WTC11 (cell line): ENCODE measurements at regions of chr4 and their contacts with region 1.

Region 1: GRCh38 chr4:41281038-41281634 is 24.4 kb downstream of the UCHL1 start:
- DNase-seq: no peak
- ATAC-seq: peak; percentile 98
- H3K4me3 Mint-ChIP-seq: no peak overlapping the region
- H3K27ac Mint-ChIP-seq: no peak overlapping the region
- H3K4me1 Mint-ChIP-seq: no peaks in the 10 kb centered on the region
- H3K27me3 Mint-ChIP-seq: peaks cover 5% of the 10 kb centered on the region; the same call in 1 of the 2 replicates
- CTCF ChIP-seq: peak; percentile 69; the same call in 1 of the 2 replicates

Region 2: GRCh38 chr4:41216294-41217019 is 64.7 kb before region 1 on chr4:
- CTCF ChIA-PET with region 1: no interaction called
- POLR2A ChIA-PET with region 1: no interaction called
- DNase-seq: peak; percentile 80
- ATAC-seq: peak; percentile 22
- H3K4me3 Mint-ChIP-seq: peak overlapping the region; percentile 83
- H3K27ac Mint-ChIP-seq: peak overlapping the region; percentile 99
- H3K4me1 Mint-ChIP-seq: peaks cover 48% of the 10 kb centered on the region
- H3K27me3 Mint-ChIP-seq: peaks cover 13% of the 10 kb centered on the region
- CTCF ChIP-seq: no peak

Region 3: GRCh38 chr4:41268022-41268421 is 13.1 kb before region 1 on chr4:
- CTCF ChIA-PET with region 1: no interaction called
- POLR2A ChIA-PET with region 1: no interaction called
- DNase-seq: no peak
- ATAC-seq: no peak
- H3K4me3 Mint-ChIP-seq: no peak overlapping the region
- H3K27ac Mint-ChIP-seq: no peak overlapping the region
- H3K4me1 Mint-ChIP-seq: no peaks in the 10 kb centered on the region
- H3K27me3 Mint-ChIP-seq: no peaks in the 10 kb centered on the region
- CTCF ChIP-seq: no peak

Region 4: GRCh38 chr4:41339812-41340809 is 59.0 kb after region 1 on chr4:
- CTCF ChIA-PET with region 1: interaction called, 10 read pairs
- POLR2A ChIA-PET with region 1: no interaction called
- DNase-seq: peak; percentile 58
- ATAC-seq: peak; percentile 92
- H3K4me3 Mint-ChIP-seq: no peak overlapping the region
- H3K27ac Mint-ChIP-seq: peak overlapping the region; percentile 82
- H3K4me1 Mint-ChIP-seq: peaks cover 20% of the 10 kb centered on the region
- H3K27me3 Mint-ChIP-seq: no peaks in the 10 kb centered on the region
- CTCF ChIP-seq: no peak

Region 5: DNA sequence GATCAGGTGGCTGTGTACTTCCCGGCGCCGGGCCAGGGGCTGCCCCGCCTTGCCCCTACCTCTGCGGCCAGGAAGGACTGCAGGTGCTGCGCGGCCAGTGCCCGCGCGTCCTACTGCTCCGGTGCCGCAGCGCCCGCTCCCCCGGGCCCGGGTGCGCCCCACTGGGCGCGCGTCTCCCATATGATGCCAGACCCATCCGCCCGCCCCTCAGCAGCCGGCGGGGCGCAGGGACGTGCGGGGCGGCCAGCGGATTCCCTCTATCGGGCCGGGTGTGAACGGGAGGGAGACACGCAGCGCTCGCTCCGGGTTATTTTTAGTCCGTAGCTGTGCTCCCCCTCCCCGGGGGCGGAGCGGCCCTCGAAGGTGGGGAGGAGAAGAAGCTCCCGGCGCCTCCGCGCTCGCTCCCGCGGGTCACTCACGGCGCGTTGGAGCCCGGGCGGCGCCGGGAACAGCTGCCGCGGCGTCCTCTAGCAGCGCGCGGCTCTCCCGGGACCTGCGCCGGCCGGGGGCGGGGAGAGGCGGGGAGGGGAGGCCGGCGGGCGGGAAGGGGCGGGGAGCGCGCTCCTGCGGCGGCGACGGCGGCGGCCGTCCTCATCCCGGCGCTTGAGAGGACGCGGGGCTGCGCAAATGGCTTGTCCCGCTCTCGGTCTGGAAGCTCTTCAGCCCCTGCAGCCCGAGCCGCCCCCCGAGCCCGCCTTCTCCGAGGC is 79.2 kb after region 1 on chr4:
- CTCF ChIA-PET with region 1: interaction called, 29 read pairs
- POLR2A ChIA-PET with region 1: no interaction called
- DNase-seq: peak; percentile 64
- ATAC-seq: peak; percentile 28
- H3K4me3 Mint-ChIP-seq: peak overlapping the region; percentile 66
- H3K27ac Mint-ChIP-seq: no peak overlapping the region
- H3K4me1 Mint-ChIP-seq: peaks cover 40% of the 10 kb centered on the region
- H3K27me3 Mint-ChIP-seq: peaks cover 91% of the 10 kb centered on the region
- CTCF ChIP-seq: no peak

Region 6: GRCh38 chr4:41644288-41644914 is 363.3 kb after region 1 on chr4:
- CTCF ChIA-PET with region 1: interaction called, 10 read pairs
- POLR2A ChIA-PET with region 1: no interaction called
- DNase-seq: peak; percentile 94
- ATAC-seq: peak; percentile 97
- H3K4me3 Mint-ChIP-seq: peak overlapping the region; percentile 64
- H3K27ac Mint-ChIP-seq: no peak overlapping the region
- H3K4me1 Mint-ChIP-seq: peaks cover 14% of the 10 kb centered on the region
- H3K27me3 Mint-ChIP-seq: peaks cover 25% of the 10 kb centered on the region
- CTCF ChIP-seq: peak; percentile 90

Region 7: DNA sequence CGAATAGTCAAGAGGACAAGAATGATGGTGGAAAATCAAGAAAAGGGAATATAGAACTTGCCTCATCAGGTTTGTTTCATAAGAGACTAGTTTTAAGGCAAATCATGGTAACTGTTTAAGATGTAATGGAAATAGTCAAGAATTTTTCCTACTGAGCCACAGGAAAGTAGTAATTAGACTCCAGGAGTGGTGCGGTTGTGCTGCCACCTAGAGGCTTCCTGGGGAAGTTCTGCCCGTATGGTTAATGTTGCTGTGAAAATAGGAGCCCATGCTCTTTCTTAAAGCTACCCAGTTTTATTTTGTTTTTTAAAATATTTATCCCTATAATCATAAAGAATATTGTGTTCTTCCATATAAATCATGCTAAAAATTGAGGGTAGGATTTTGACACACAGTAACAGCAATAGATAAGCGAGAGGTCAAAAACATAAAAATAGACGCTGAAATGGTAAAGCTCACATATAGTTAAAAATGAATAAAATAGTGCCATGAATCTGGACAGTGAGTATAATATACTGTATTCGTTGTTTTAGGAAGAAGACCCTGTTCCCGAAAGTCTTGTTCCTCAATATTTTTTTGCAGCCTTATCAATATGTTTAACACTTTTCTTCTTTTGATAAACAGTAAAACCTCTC is 380.4 kb after region 1 on chr4:
- CTCF ChIA-PET with region 1: interaction called, 43 read pairs
- POLR2A ChIA-PET with region 1: no interaction called
- DNase-seq: peak; percentile 57
- ATAC-seq: peak; percentile 55
- H3K4me3 Mint-ChIP-seq: no peak overlapping the region
- H3K27ac Mint-ChIP-seq: no peak overlapping the region
- H3K4me1 Mint-ChIP-seq: peaks cover 9% of the 10 kb centered on the region
- H3K27me3 Mint-ChIP-seq: no peaks in the 10 kb centered on the region
- CTCF ChIP-seq: peak; percentile 87